Posterior cingulate gyrus (tissue), 11 donors: ENCODE measurements at regions of chr3 and their contacts with region 1.

Region 1: DNA sequence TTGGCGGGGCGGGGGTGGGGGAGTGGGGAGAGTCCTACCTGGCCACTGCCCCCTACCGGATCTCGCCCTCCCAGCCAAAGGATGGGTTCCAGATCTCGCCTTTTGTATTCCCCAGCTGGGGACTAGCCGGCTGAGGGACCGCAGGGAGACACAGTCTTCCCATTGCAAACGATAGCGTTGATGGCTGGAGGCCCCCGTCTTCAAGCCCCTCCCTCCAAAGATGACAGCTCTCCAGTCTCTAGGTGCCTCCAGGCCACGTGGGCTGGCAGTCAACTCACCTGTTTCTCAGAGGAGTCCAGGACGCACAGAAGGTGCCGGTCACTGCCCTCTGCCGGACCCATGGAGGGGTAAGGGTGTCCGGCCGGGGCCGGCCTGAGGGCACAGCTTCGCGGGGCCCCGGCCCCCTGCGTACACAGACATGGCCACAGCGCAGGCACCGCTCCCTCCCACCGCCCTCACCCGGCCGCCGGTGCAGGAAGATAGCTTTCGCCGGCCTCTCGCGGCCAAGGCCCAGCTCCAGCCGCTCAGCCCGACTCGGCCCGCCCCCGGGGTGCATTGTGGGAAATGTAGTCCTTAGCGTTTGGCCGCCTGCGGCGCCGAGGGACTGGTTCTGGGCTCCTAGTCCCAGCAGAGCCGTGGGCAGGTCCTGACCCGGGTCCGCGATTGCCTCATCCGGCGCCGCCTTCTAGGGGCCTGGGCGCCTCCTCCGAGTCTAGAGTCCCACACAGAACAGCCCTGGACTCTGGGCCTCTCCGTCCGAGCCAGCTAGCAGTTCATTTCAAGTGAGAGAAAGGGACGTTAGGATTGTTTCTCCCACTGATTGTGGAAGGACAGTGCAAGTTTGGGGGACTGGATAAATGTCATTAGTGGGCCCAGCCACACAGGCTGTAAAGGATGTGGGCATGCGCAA is at the start of gene MON1A:
- DNase-seq: peak; percentile 93 to 99 (median 96)

Region 2: GRCh38 chr3:49939858-49940666 is 10.5 kb after region 1 on chr3 and contains the start of gene RBM6:
- intact Hi-C with region 1: loop called (anchors 1 kb)
- DNase-seq: peak; percentile 98 to 100 (median 100)

Region 3: GRCh38 chr3:50095352-50095998 is 165.9 kb after region 1 on chr3:
- intact Hi-C with region 1: loop called (anchors 10 kb)
- DNase-seq: no peak